Psoas muscle (tissue), 8 donors: ENCODE measurements at regions of chr19 and their contacts with region 1.

Region 1: GRCh38 chr19:39412100-39412866 is at the start of gene PLEKHG2:
- DNase-seq: peak; percentile 94 to 97
- ATAC-seq: peak; percentile 52 to 67 (median 53)
- H3K4me3 ChIP-seq: peak within 1 kb of the TSS; percentile 97
- H3K27ac ChIP-seq: peak within 1 kb of the TSS; percentile 96
- H3K4me1 ChIP-seq: peaks cover 14% of the 10 kb centered on the region
- H3K27me3 ChIP-seq: no peaks in the 10 kb centered on the region
- CTCF ChIP-seq: no peak
- total RNA-seq, gene PLEKHG2: 6.8 to 8.0 (median 7.4) TPM

Region 2: GRCh38 chr19:39125554-39126311 is 286.6 kb before region 1 on chr19 and contains the start of gene PAK4:
- intact Hi-C with region 1: loop called in 1 of 2 experiments (anchors 10 kb)
- DNase-seq: peak; percentile 98 to 99
- ATAC-seq: peak; percentile 100
- H3K4me3 ChIP-seq: peak within 1 kb of the TSS; percentile 95
- H3K27ac ChIP-seq: peak within 1 kb of the TSS; percentile 71
- H3K4me1 ChIP-seq: peaks cover 8% of the 10 kb centered on the region
- H3K27me3 ChIP-seq: peaks cover 0 to 5% (median 0%) of the 10 kb centered on the region in 3 donors
- CTCF ChIP-seq: no peak
- total RNA-seq, gene PAK4: 10.6 to 17.3 (median 11.6) TPM

Region 3: GRCh38 chr19:39282021-39282420 is 130.3 kb before region 1 on chr19:
- intact Hi-C with region 1: no loop called
- DNase-seq: no peak
- ATAC-seq: no peak
- H3K4me3 ChIP-seq: no peak overlapping the region
- H3K27ac ChIP-seq: no peak overlapping the region
- H3K4me1 ChIP-seq: no peaks in the 10 kb centered on the region
- H3K27me3 ChIP-seq: peaks cover 0 to 3% (median 0%) of the 10 kb centered on the region in 3 donors
- CTCF ChIP-seq: no peak

Region 4: GRCh38 chr19:39341719-39342604 is 70.3 kb before region 1 on chr19 and contains the start of gene SAMD4B:
- intact Hi-C with region 1: loop called in 1 of 2 experiments (anchors 5 kb)
- DNase-seq: peak; percentile 99 to 100
- ATAC-seq: peak; percentile 94 to 97 (median 96)
- H3K4me3 ChIP-seq: peak within 1 kb of the TSS; percentile 91
- H3K27ac ChIP-seq: peak within 1 kb of the TSS; percentile 86
- H3K4me1 ChIP-seq: peaks cover 34% of the 10 kb centered on the region
- H3K27me3 ChIP-seq: no peaks in the 10 kb centered on the region
- CTCF ChIP-seq: peak; percentile 79
- total RNA-seq, gene SAMD4B: 34.7 to 66.4 (median 51.7) TPM

Region 5: GRCh38 chr19:39381910-39382611 is 30.2 kb before region 1 on chr19:
- intact Hi-C with region 1: loop called in 1 of 2 experiments (anchors 5 kb)
- DNase-seq: no peak
- ATAC-seq: peak in 1 of 4 donors; percentile 10
- H3K4me3 ChIP-seq: no peak overlapping the region
- H3K27ac ChIP-seq: no peak overlapping the region
- H3K4me1 ChIP-seq: no peaks in the 10 kb centered on the region
- H3K27me3 ChIP-seq: no peaks in the 10 kb centered on the region
- CTCF ChIP-seq: no peak

Region 6: DNA sequence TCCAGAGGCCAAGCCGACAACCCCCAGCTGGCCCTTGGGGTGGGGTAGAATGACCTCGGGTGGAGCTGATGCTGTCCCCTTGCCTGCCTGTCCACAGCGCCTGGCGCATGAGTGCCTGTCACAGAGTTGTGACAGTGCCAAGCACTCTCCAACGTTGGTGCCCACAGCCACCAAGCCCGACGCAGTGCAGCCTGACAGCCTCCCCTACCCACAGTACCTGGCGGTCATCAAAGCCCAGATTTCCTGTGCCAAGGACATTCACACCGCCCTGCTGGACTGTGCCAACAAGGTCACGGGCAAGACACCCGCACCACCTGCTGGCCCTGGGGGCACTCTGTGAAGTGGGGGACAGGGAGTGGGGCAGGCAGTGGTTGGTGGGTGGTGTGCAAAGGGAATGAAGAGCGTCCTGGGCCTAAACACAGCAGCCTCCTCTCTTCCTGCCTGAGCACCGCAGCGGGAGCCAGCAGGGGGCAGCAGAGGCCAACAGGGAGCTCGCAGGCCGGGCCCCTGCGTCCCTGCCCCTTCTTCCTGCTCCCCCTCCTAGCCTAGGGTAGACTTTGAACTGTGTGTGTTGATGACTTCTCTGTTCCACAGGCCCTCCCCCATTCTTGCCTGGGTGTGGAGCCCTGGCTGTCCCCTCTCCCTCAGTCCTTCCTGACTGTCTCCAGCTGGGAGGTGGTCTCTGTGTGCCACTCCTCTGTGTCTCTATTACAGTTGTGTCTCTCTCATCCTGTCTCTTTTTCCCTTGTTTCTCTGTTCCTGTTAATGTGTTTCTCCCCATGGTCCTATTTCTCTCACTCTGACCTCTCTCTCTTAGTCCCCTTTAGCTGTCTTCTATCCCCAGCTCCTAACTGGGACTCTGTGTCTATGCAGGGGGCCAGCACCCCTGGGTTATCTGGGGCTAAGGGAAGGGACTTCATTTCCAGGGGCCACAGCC is 14.7 kb before region 1 on chr19:
- intact Hi-C with region 1: loop called (anchors 1 to 2 kb)
- DNase-seq: peak; percentile 92 to 96
- ATAC-seq: peak; percentile 75 to 84 (median 80)
- H3K4me3 ChIP-seq: peak overlapping the region; percentile 33
- H3K27ac ChIP-seq: peak overlapping the region; percentile 84
- H3K4me1 ChIP-seq: peaks cover 26% of the 10 kb centered on the region
- H3K27me3 ChIP-seq: no peaks in the 10 kb centered on the region
- CTCF ChIP-seq: peak; percentile 98

Region 7: GRCh38 chr19:39435499-39436349 is 23.4 kb after region 1 on chr19 and contains the start of gene RPS16:
- intact Hi-C with region 1: loop called in 1 of 2 experiments (anchors 2 kb)
- DNase-seq: peak; percentile 99 to 100
- ATAC-seq: peak; percentile 97 to 98 (median 98)
- H3K4me3 ChIP-seq: peak within 1 kb of the TSS; percentile 96
- H3K27ac ChIP-seq: peak within 1 kb of the TSS; percentile 93
- H3K4me1 ChIP-seq: peaks cover 18% of the 10 kb centered on the region
- H3K27me3 ChIP-seq: no peaks in the 10 kb centered on the region
- CTCF ChIP-seq: no peak
- total RNA-seq, gene RPS16: 1,186 to 1,958 (median 1,553) TPM